Body of pancreas (tissue), 4 donors: ENCODE measurements at regions of chr14 and their contacts with region 1.

Region 1: GRCh38 chr14:75088574-75089373 is 19.3 kb downstream of the ZC2HC1C start:
- DNase-seq: peak; percentile 56 to 73 (median 62)
- ATAC-seq: peak; percentile 73
- H3K4me3 ChIP-seq: no peak overlapping the region
- H3K27ac ChIP-seq: no peak overlapping the region
- H3K4me1 ChIP-seq: peaks cover 10% of the 10 kb centered on the region
- H3K27me3 ChIP-seq: no peaks in the 10 kb centered on the region
- CTCF ChIP-seq: peak; percentile 62 to 91 (median 86)
- POLR2A ChIP-seq: no peak

Region 2: DNA sequence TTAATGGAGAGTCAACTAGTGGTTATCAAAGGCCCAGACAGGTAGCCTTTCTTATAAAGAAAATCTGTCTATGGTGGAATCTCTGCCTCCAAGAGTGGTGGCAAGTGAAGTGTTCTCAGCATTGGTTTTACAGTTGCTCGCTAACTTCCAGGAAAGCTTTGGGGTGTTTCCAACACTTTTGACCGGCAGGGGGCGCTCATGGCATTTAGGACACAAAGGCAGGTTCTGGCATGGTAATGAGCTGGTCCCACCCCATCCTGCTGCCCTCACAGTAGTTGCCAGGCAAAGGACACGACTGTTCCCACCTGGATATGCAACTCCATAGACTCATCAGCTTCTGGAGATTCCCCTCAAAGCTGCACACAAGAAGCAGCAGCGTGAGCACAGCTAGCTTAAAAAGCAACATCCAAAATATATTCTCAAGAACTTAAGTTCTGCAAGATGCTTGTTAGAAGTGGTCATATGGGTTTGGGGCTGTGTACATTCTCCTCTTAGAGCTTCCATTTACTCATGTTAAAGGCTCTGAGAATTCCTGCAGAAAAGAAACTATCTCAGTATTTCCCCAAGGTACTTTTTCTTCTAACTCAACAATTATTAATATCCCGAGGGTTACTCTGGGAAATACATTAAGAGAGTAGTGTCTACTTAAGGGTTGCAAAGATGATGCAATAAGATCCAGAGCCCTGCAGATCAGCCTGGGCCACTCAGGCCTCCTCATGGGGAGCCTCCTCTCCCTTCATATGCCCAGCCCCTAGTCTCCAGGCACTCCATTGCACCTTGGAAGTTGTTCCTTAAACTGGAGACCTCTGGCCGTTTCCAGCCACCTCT is 227.7 kb before region 1 on chr14:
- intact Hi-C with region 1: loop called (anchors 10 kb)
- DNase-seq: peak; percentile 90 to 96 (median 91)
- ATAC-seq: peak; percentile 82
- H3K4me3 ChIP-seq: no peak overlapping the region
- H3K27ac ChIP-seq: no peak overlapping the region
- H3K4me1 ChIP-seq: no peaks in the 10 kb centered on the region
- H3K27me3 ChIP-seq: no peaks in the 10 kb centered on the region
- CTCF ChIP-seq: peak; percentile 76 to 86 (median 82)
- POLR2A ChIP-seq: no peak

Region 3: DNA sequence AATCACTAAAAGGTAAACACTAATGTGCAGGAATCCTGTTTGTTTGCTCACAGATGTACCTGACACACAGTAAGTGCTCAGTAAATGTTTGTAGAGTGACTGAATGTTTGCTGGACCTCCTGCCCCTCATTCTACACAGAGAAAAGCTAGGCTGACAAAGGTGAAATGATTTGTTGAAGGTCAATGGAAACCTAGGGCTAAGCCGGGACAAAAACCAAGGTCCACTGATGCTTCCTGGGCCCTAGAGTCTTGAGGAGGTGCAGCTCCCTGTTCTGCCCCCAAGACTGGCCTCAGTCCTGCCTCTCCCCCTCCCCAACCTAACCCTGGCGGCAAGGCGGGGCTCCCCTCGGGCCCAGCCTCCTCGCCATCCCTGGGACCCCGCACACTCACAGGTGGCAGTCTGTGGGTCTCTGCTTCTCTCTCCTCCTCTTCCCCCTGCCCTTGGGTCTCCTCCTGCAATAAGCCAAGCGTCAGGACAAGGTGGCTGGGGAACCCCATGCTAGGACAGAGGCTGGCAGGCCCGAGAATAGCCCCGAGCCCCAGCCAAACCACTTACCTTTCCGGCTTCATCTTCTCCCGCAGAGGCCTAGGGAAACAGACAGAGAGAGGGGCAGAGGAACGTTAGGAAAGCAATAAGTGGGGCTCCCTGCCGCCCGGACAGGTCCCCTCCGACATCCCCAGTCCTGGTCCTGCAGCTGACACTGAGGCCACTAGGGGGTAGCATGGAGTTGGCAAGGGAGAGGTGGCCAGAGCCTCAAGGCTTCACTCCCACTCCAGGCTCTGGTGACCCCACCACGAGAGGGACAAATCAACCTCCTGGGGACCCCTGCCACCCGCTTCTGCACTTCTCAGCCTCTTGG is 142.7 kb before region 1 on chr14:
- intact Hi-C with region 1: loop called (anchors 5 kb)
- DNase-seq: peak; percentile 74 to 81 (median 78)
- ATAC-seq: peak; percentile 80
- H3K4me3 ChIP-seq: no peak overlapping the region
- H3K27ac ChIP-seq: no peak overlapping the region
- H3K4me1 ChIP-seq: peaks cover 17% of the 10 kb centered on the region
- H3K27me3 ChIP-seq: no peaks in the 10 kb centered on the region
- CTCF ChIP-seq: peak; percentile 75 to 96 (median 87)
- POLR2A ChIP-seq: no peak